ENCODE measurements at regions of chr3 and their contacts with region 1.

Region 1: GRCh38 chr3:181700168-181701087 is 11.3 kb upstream of the SOX2 start:
- DNase-seq: peak; percentile 28
- H3K4me3 ChIP-seq: peak overlapping the region; percentile 42
- H3K27ac ChIP-seq: no peak overlapping the region
- H3K27me3 ChIP-seq: peaks cover 50% of the 10 kb centered on the region
- CTCF ChIP-seq: peak; percentile 89

Region 2: GRCh38 chr3:180612364-180612763 is 1088.1 kb before region 1 on chr3:
- in situ Hi-C with region 1: no loop called
- DNase-seq: no peak
- H3K4me3 ChIP-seq: no peak overlapping the region
- H3K27ac ChIP-seq: no peak overlapping the region
- H3K27me3 ChIP-seq: no peaks in the 10 kb centered on the region
- CTCF ChIP-seq: no peak

Region 3: DNA sequence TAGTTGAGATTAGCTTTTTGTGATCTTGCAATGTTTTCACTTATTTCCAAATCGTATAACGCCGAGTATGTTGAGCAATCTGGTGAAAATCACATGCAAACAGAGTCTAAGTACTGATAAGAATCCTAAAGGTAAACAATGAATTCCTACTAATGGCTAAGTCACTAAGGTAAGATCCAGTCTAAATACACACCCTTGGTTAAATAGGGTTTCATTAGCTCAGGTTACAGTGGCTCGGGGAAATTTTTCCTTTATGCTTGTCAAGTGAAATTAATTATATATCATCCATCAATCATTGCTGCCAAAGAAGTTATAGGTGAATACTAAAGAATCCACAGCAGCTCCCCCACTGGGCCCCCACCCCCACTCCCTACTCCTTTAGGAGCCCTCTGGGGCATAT is 150.6 kb after region 1 on chr3:
- in situ Hi-C with region 1: no loop called
- DNase-seq: no peak
- H3K4me3 ChIP-seq: no peak overlapping the region
- H3K27ac ChIP-seq: no peak overlapping the region
- H3K27me3 ChIP-seq: no peaks in the 10 kb centered on the region
- CTCF ChIP-seq: no peak

Region 4: GRCh38 chr3:182258538-182259177 is 558.2 kb after region 1 on chr3:
- in situ Hi-C with region 1: loop called (anchors 25 kb)
- DNase-seq: no peak
- H3K4me3 ChIP-seq: no peak overlapping the region
- H3K27ac ChIP-seq: no peak overlapping the region
- H3K27me3 ChIP-seq: no peaks in the 10 kb centered on the region
- CTCF ChIP-seq: peak; percentile 64

Region 5: GRCh38 chr3:182683453-182683852 is 983.0 kb after region 1 on chr3:
- in situ Hi-C with region 1: loop called (anchors 10 kb)
- DNase-seq: peak; percentile 69
- H3K4me3 ChIP-seq: no peak overlapping the region
- H3K27ac ChIP-seq: no peak overlapping the region
- H3K27me3 ChIP-seq: no peaks in the 10 kb centered on the region
- CTCF ChIP-seq: peak; percentile 93

Region 6: GRCh38 chr3:182697345-182697919 is 997.0 kb after region 1 on chr3:
- in situ Hi-C with region 1: no loop called
- DNase-seq: no peak
- H3K4me3 ChIP-seq: no peak overlapping the region
- H3K27ac ChIP-seq: no peak overlapping the region
- H3K27me3 ChIP-seq: no peaks in the 10 kb centered on the region
- CTCF ChIP-seq: no peak

Measured in brain microvascular endothelial cell (primary cell).